Activated naive CD4-positive, alpha-beta T cell treated with anti-CD3 and anti-CD28 coated beads for 36 hours (primary cell): ENCODE measurements at regions of chr11 and their contacts with region 1.

Region 1: DNA sequence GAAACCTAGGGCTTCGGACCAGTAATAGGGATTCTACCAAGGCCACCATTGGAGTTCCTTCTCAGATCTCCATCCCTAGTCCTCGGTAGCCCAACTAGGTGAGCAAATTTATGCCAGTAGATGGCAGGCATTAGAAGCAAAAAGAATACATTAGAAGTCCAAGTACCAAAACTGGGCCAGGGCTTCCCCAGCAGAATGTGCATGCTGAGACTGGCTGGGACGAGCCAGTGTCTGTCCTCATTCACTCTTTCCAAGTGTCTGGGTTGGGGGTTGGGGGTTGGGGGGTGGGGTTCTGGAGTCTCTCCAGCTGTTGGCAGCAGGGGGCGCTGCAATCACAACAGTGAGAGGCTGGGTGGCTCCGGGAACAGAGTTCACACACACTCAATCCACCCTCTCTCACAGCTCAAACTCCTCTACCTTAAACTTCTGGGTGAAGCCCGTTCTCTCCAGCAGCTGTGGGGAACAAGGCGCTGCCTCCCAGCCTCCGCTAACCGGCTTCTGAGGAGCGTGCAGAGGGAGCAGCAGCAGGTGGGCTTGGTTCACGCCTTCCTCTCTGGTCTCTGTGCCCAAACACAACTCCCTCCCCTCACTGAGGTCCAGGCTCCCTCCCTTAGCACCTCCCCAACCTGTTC is 57.5 kb downstream of the BTG4 start:
- DNase-seq: peak; percentile 85
- H3K4me3 Mint-ChIP-seq: no peak overlapping the region
- H3K27ac Mint-ChIP-seq: no peak overlapping the region
- H3K4me1 Mint-ChIP-seq: no peaks in the 10 kb centered on the region
- H3K27me3 Mint-ChIP-seq: peaks cover 5% of the 10 kb centered on the region

Region 2: GRCh38 chr11:111520565-111520964 is 65.9 kb after region 1 on chr11:
- CTCF ChIA-PET with region 1: no interaction called
- intact Hi-C with region 1: loop called (anchors 1 kb)
- DNase-seq: no peak
- H3K4me3 Mint-ChIP-seq: no peak overlapping the region
- H3K27ac Mint-ChIP-seq: peak overlapping the region; percentile 16
- H3K4me1 Mint-ChIP-seq: peaks cover 42% of the 10 kb centered on the region
- H3K27me3 Mint-ChIP-seq: peaks cover 3% of the 10 kb centered on the region

Region 3: GRCh38 chr11:111565114-111565720 is 110.5 kb after region 1 on chr11:
- CTCF ChIA-PET with region 1: interaction called, 22 read pairs
- intact Hi-C with region 1: loop called (anchors 1 kb)
- DNase-seq: peak; percentile 83
- H3K4me3 Mint-ChIP-seq: no peak overlapping the region
- H3K27ac Mint-ChIP-seq: no peak overlapping the region
- H3K4me1 Mint-ChIP-seq: no peaks in the 10 kb centered on the region
- H3K27me3 Mint-ChIP-seq: peaks cover 2% of the 10 kb centered on the region

Region 4: GRCh38 chr11:111586388-111586831 is 131.7 kb after region 1 on chr11:
- CTCF ChIA-PET with region 1: interaction called, 14 read pairs
- intact Hi-C with region 1: loop called (anchors 1 kb)
- DNase-seq: peak; percentile 69
- H3K4me3 Mint-ChIP-seq: no peak overlapping the region
- H3K27ac Mint-ChIP-seq: no peak overlapping the region
- H3K4me1 Mint-ChIP-seq: no peaks in the 10 kb centered on the region
- H3K27me3 Mint-ChIP-seq: peaks cover 2% of the 10 kb centered on the region

Region 5: DNA sequence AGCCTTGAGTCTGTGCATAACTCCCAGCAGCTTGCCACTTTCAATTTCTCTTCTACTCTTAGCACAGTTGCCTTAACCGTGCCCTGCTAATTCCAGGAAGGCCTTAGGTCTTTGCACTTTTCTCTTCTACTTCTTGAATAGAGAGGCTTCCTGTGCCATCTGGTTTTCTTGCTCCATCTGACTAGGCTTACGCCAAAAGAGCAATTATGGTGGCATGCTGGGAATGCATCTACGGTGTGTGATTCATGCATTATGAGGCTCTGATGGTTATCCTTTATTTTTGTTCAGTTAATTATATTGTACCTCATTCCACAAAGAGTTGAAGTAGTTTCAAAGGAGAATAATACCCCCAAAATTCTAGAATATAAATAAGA is 177.0 kb after region 1 on chr11:
- CTCF ChIA-PET with region 1: no interaction called
- intact Hi-C with region 1: no loop called
- DNase-seq: peak; percentile 26
- H3K4me3 Mint-ChIP-seq: no peak overlapping the region
- H3K27ac Mint-ChIP-seq: no peak overlapping the region
- H3K4me1 Mint-ChIP-seq: peaks cover 26% of the 10 kb centered on the region
- H3K27me3 Mint-ChIP-seq: no peaks in the 10 kb centered on the region

Region 6: DNA sequence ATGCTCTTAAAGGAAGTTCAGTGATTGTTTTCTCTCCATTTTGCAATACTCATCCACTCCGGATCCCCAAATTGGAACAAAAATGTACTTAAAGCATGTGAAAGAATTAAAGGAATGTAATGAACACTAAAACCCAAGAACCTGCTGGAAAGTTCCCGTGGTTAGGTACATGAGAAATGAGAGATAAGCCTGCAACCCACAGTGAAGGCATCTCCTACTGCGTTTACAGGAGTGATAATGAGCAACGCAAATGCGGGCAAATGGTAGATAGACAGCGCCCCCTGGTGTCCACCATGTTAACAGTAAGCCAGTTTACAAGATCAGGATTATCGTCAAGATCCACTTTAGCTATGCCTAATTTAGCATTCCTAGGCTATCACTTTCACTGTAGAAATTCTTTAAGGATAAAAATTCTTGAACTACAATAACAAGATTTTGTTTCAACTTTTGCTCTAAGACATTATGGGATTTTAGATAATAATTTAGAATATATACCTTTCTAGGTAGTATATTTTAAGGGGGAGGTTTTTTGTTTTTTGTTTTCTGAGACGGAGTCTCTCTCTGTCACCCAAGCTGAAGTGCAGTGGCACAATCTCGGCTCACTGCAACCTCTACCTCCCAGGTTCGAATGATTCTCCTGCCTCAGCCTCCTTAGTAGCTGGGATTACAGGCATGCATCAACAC is 386.8 kb after region 1 on chr11:
- CTCF ChIA-PET with region 1: interaction called, 3 read pairs
- intact Hi-C with region 1: loop called (anchors 1 kb)
- DNase-seq: peak; percentile 96
- H3K4me3 Mint-ChIP-seq: no peak overlapping the region
- H3K27ac Mint-ChIP-seq: no peak overlapping the region
- H3K4me1 Mint-ChIP-seq: no peaks in the 10 kb centered on the region
- H3K27me3 Mint-ChIP-seq: no peaks in the 10 kb centered on the region